ENCODE measurements at regions of chr18 and their contacts with region 1.

Region 1: GRCh38 chr18:51278045-51278649 is 80.7 kb upstream of the MEX3C start:
- DNase-seq: peak; percentile 24 to 55 (median 34)
- H3K4me3 ChIP-seq: no peak overlapping the region
- H3K27ac ChIP-seq: no peak overlapping the region
- H3K4me1 ChIP-seq: no peaks in the 10 kb centered on the region
- H3K27me3 ChIP-seq: no peaks in the 10 kb centered on the region
- CTCF ChIP-seq: peak in 4 of 6 experiments; percentile 10 to 45 (median 24)
- POLR2A ChIP-seq: no peak

Region 2: GRCh38 chr18:51082571-51083267 is 195.4 kb before region 1 on chr18:
- intact Hi-C with region 1: no loop called
- DNase-seq: no peak
- H3K4me3 ChIP-seq: no peak overlapping the region
- H3K27ac ChIP-seq: no peak overlapping the region
- H3K4me1 ChIP-seq: no peaks in the 10 kb centered on the region
- H3K27me3 ChIP-seq: no peaks in the 10 kb centered on the region
- CTCF ChIP-seq: no peak
- POLR2A ChIP-seq: no peak

Region 3: DNA sequence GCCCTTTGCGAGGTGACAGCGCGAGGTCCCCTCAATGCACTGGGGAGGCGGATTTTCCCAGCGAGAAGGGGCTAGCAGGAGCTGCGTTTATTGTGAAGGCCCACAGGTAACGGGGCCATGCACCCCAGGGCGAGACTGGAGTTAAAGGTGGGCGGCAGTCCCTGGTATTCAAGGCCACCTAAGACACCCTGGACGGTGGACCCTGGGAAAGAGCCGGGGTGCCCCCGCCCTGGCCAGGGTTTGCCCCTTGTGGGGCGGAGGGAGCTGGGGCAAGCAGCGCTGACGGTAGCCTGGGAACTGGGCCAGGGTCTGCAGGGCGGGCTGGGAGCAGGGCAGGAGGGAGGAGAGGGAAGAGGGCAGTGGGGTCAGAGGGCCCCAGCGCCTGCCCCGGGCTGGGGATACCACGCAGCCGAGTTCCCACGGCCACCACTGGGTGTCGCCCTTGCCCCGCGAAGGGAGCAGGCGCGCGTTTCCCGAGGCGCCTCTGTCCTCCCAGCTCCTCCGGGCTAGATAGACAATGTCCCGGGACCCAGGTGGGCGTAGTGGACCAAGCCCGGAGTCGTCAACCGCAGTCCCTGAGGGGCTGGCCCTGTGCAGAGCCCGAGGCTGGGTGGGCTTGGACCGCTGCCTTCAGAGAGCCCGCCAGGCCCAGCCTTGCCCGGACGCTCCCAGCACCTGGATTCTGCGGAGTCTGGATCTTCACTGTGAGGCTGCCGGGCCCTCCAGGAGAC is 167.9 kb before region 1 on chr18:
- intact Hi-C with region 1: no loop called
- DNase-seq: peak; percentile 53 to 81 (median 72)
- H3K4me3 ChIP-seq: no peak overlapping the region
- H3K27ac ChIP-seq: no peak overlapping the region
- H3K4me1 ChIP-seq: peaks cover 0 to 3% of the 10 kb centered on the region in 2 donors
- H3K27me3 ChIP-seq: no peaks in the 10 kb centered on the region
- CTCF ChIP-seq: peak; percentile 88 to 98 (median 94)
- POLR2A ChIP-seq: no peak

Region 4: GRCh38 chr18:51211552-51211951 is 66.6 kb before region 1 on chr18:
- intact Hi-C with region 1: loop called in 1 of 2 experiments (anchors 10 kb)
- DNase-seq: peak in 5 of 7 donors; percentile 11 to 54 (median 40)
- H3K4me3 ChIP-seq: no peak overlapping the region
- H3K27ac ChIP-seq: no peak overlapping the region
- H3K4me1 ChIP-seq: no peaks in the 10 kb centered on the region
- H3K27me3 ChIP-seq: no peaks in the 10 kb centered on the region
- CTCF ChIP-seq: no peak
- POLR2A ChIP-seq: no peak

Measured in adrenal gland (tissue), 19 donors.